ENCODE measurements at regions of chr14 and their contacts with region 1.

Region 1: GRCh38 chr14:105281371-105282097 is 19.3 kb downstream of the BRF1 start:
- DNase-seq: peak; percentile 83
- ATAC-seq: peak; percentile 88
- H3K4me3 ChIP-seq: no peak overlapping the region
- H3K27ac ChIP-seq: no peak overlapping the region
- H3K4me1 ChIP-seq: no peaks in the 10 kb centered on the region; the same call in 1 of the 2 replicates
- H3K27me3 ChIP-seq: no peaks in the 10 kb centered on the region
- CTCF ChIP-seq: peak; percentile 86
- POLR2A ChIP-seq: no peak
- RAD21 ChIP-seq: peak; percentile 82

Region 2: DNA sequence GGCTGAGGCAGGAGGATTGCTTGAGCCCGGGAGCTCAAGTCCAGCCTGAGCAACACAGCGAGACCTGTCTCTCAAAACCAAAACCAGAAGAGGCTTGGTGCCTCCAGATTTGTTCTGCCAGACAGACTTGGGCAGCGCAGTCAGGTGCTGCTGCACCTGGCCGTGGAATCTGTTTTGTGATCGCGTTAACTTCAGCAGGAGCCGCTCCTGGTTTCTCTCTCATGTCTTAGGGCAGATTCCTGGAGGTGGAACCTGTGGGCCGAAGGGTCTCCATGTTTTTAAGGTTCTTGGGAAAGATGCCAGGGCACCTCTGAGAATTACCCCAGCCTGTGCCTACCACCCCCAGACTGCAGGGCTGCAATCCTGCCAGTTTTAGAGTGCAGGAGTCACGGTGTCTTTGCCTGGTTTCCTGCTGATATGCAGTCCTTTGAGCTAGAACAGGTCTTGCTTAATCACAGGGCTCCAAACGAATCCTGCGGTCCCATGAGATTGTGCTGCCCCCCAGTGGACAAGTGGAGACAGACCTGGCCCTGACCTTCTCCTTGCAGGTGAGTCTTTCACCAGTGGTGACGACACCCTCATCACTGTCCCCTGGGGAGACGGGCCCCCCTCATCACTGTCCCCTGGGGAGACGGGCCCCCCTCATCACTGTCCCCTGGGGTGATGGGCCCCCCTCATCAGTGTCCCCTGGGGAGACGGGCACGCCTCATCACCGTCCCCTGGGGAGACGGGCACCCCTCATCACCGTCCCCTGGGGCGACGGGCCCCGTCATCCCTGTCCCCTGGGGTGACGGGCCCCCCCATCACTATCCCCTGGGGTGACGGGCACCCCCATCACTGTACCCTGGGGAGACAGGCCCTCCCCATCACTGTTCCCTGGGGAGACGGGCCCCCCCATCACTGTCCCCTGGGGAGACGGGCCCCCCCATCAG is 70.7 kb after region 1 on chr14:
- CTCF ChIA-PET with region 1: no interaction called
- POLR2A ChIA-PET with region 1: no interaction called
- dilution Hi-C with region 1: no loop called
- in situ Hi-C with region 1: no loop called
- intact Hi-C with region 1: loop called (anchors 5 kb)
- DNase-seq: peak; percentile 85
- ATAC-seq: peak; percentile 95
- H3K4me3 ChIP-seq: no peak overlapping the region
- H3K27ac ChIP-seq: no peak overlapping the region
- H3K4me1 ChIP-seq: peaks cover 2% of the 10 kb centered on the region; the same call in 1 of the 2 replicates
- H3K27me3 ChIP-seq: no peaks in the 10 kb centered on the region
- CTCF ChIP-seq: peak; percentile 91
- POLR2A ChIP-seq: no peak
- RAD21 ChIP-seq: peak; percentile 97

Measured in IMR-90 (cell line).